ENCODE measurements at regions of chr7 and their contacts with region 1.

Region 1: GRCh38 chr7:44962483-44963251 is 16.1 kb downstream of the MYO1G start:
- DNase-seq: no peak
- ATAC-seq: no peak
- H3K4me3 ChIP-seq: no peak overlapping the region
- H3K27ac ChIP-seq: no peak overlapping the region
- H3K4me1 ChIP-seq: peaks cover 3 to 5% of the 10 kb centered on the region in 2 experiments; a peak in 2 of 4 replicates
- H3K27me3 ChIP-seq: no peaks in the 10 kb centered on the region
- CTCF ChIP-seq: no peak
- POLR2A ChIP-seq: no peak
- RAD21 ChIP-seq: no peak

Region 2: GRCh38 chr7:44581879-44582603 is 380.6 kb before region 1 on chr7 and contains the start of gene TMED4:
- CTCF ChIA-PET with region 1: no interaction called
- POLR2A ChIA-PET with region 1: no interaction called
- RAD21 ChIA-PET with region 1: no interaction called
- intact Hi-C with region 1: loop called (anchors 10 kb)
- DNase-seq: peak; percentile 96
- ATAC-seq: peak; percentile 94
- H3K4me3 ChIP-seq: peak within 1 kb of the TSS; percentile 79 to 98
- H3K27ac ChIP-seq: peak within 1 kb of the TSS; percentile 80
- H3K4me1 ChIP-seq: peaks cover 5 to 16% of the 10 kb centered on the region in 2 experiments; a peak in 2 of 4 replicates
- H3K27me3 ChIP-seq: no peaks in the 10 kb centered on the region
- CTCF ChIP-seq: no peak
- POLR2A ChIP-seq: peak; percentile 90
- RAD21 ChIP-seq: no peak
- total RNA-seq, gene TMED4: 67.3 TPM

Region 3: DNA sequence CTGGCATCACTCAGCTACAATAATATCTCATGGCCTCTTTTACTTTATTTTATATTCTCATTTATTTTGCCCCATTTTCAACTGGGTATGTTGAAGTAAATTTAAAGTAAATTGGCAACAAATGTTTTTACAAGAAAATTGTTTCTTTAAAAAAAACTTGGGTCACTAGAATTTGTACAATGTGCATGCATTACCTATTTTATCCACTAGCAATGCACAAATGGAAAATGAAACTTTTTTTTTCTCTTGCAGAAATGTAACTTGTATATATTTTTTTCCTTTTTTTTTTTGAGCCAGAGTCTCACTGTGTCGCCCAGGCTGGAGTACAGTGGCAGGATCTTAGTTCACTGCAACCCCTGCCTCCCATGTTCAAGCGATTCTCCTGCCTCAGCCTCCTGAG is 104.5 kb before region 1 on chr7:
- CTCF ChIA-PET with region 1: no interaction called
- POLR2A ChIA-PET with region 1: no interaction called
- RAD21 ChIA-PET with region 1: no interaction called
- intact Hi-C with region 1: loop called (anchors 1 kb)
- DNase-seq: no peak
- ATAC-seq: no peak
- H3K4me3 ChIP-seq: no peak overlapping the region
- H3K27ac ChIP-seq: no peak overlapping the region
- H3K4me1 ChIP-seq: peaks cover 3 to 31% of the 10 kb centered on the region in 2 experiments; a peak in 3 of 4 replicates
- H3K27me3 ChIP-seq: no peaks in the 10 kb centered on the region
- CTCF ChIP-seq: peak in 2 of 3 experiments; percentile 8 to 22; a peak in 1 of 6 replicates
- POLR2A ChIP-seq: no peak
- RAD21 ChIP-seq: no peak

Region 4: GRCh38 chr7:45122975-45123860 is 160.6 kb after region 1 on chr7:
- CTCF ChIA-PET with region 1: no interaction called
- POLR2A ChIA-PET with region 1: no interaction called
- RAD21 ChIA-PET with region 1: no interaction called
- intact Hi-C with region 1: no loop called
- DNase-seq: no peak
- ATAC-seq: no peak
- H3K4me3 ChIP-seq: no peak overlapping the region
- H3K27ac ChIP-seq: no peak overlapping the region
- H3K4me1 ChIP-seq: no peaks in the 10 kb centered on the region
- H3K27me3 ChIP-seq: no peaks in the 10 kb centered on the region
- CTCF ChIP-seq: no peak
- POLR2A ChIP-seq: no peak
- RAD21 ChIP-seq: no peak

Measured in HCT116 (cell line).